ENCODE measurements at regions of chr14 and their contacts with region 1.

Region 1: GRCh38 chr14:46048127-46048526 is 603.5 kb downstream of the RPL10L start:
- DNase-seq: peak; percentile 3
- ATAC-seq: no peak
- H3K4me3 ChIP-seq: no peak overlapping the region
- H3K27ac ChIP-seq: no peak overlapping the region
- H3K4me1 ChIP-seq: no peaks in the 10 kb centered on the region
- H3K27me3 ChIP-seq: no peaks in the 10 kb centered on the region
- CTCF ChIP-seq: peak in 2 of 3 experiments; percentile 48 to 49; a peak in 3 of 6 replicates
- EP300 ChIP-seq: no peak
- POLR2A ChIP-seq: no peak
- RAD21 ChIP-seq: peak; percentile 70

Region 2: GRCh38 chr14:45526715-45527549 is 521.2 kb before region 1 on chr14:
- CTCF ChIA-PET with region 1: no interaction called
- POLR2A ChIA-PET with region 1: no interaction called
- RAD21 ChIA-PET with region 1: no interaction called
- SMC1A ChIA-PET with region 1: no interaction called
- in situ Hi-C with region 1: no loop called
- intact Hi-C with region 1: no loop called
- DNase-seq: peak; percentile 1
- ATAC-seq: peak; percentile 94
- H3K4me3 ChIP-seq: no peak overlapping the region
- H3K27ac ChIP-seq: no peak overlapping the region
- H3K4me1 ChIP-seq: no peaks in the 10 kb centered on the region
- H3K27me3 ChIP-seq: no peaks in the 10 kb centered on the region
- CTCF ChIP-seq: peak; percentile 56 to 66 (median 61); a peak in 5 of 6 replicates
- EP300 ChIP-seq: no peak
- POLR2A ChIP-seq: no peak
- RAD21 ChIP-seq: peak; percentile 59

Region 3: GRCh38 chr14:46344327-46344937 is 296.3 kb after region 1 on chr14:
- CTCF ChIA-PET with region 1: no interaction called
- POLR2A ChIA-PET with region 1: no interaction called
- RAD21 ChIA-PET with region 1: no interaction called
- SMC1A ChIA-PET with region 1: no interaction called
- in situ Hi-C with region 1: no loop called
- intact Hi-C with region 1: loop called (anchors 1 kb)
- DNase-seq: peak; percentile 2
- ATAC-seq: peak; percentile 95
- H3K4me3 ChIP-seq: no peak overlapping the region
- H3K27ac ChIP-seq: no peak overlapping the region
- H3K4me1 ChIP-seq: no peaks in the 10 kb centered on the region
- H3K27me3 ChIP-seq: no peaks in the 10 kb centered on the region
- CTCF ChIP-seq: peak; percentile 48 to 62 (median 61)
- EP300 ChIP-seq: no peak
- POLR2A ChIP-seq: no peak
- RAD21 ChIP-seq: peak; percentile 78